ENCODE measurements at regions of chr18 and their contacts with region 1.

Region 1: DNA sequence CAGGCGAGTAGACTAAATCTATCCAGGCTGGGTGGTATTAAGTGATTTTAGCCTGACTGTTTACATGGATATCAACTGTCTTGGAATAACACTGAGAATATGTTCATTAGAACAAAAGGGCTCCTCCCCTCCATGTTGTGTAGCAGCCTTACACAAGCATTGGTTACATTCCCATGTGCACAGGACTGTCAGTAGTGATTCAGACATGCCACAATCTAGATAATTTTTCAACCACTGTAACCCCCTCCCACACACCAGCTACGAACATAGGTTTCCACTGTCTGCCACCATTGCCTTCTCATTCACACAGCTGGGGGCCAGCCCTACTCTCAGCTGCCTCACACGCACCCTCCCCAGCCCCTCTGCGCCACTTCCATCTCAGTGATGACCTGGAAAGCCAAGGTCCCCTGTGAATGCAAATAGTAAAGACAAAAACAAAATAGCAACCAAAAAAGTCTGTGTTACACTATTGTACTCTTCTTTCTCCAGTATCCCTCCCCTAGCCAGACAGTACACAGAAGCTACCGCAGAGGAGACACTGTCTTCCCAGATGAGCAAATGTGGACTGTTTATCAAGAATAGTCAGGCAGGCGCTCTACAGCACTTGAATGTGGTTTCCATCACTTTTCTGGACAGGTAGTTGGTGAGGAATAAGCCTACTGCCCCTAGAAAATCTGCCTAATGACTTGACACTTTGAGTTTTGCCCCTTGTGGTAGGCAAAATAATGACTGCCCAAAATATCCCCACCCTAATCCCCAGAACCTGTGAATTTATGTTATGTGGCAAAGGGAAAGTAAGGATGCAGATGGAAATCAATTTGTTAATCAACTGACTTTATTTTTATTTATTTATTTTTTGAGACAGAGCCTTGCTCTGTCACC is 27.9 kb upstream of the TYMS start:
- DNase-seq: no peak
- H3K4me3 ChIP-seq: no peak overlapping the region
- H3K27ac ChIP-seq: no peak overlapping the region
- H3K4me1 ChIP-seq: no peaks in the 10 kb centered on the region
- H3K27me3 ChIP-seq: peaks cover 19% of the 10 kb centered on the region; the same call in 1 of the 2 replicates
- CTCF ChIP-seq: no peak; the same call in 1 of the 2 replicates

Region 2: GRCh38 chr18:644395-645004 is 15.0 kb after region 1 on chr18:
- CTCF ChIA-PET with region 1: interaction called, 10 read pairs
- POLR2A ChIA-PET with region 1: no interaction called
- intact Hi-C with region 1: no loop called
- DNase-seq: no peak
- H3K4me3 ChIP-seq: no peak overlapping the region
- H3K27ac ChIP-seq: no peak overlapping the region
- H3K4me1 ChIP-seq: no peaks in the 10 kb centered on the region; the same call in 1 of the 2 replicates
- H3K27me3 ChIP-seq: no peaks in the 10 kb centered on the region
- CTCF ChIP-seq: no peak; the same call in 1 of the 2 replicates

Measured in PC-9 (cell line).